ENCODE measurements at regions of chr2 and their contacts with region 1.

Region 1: DNA sequence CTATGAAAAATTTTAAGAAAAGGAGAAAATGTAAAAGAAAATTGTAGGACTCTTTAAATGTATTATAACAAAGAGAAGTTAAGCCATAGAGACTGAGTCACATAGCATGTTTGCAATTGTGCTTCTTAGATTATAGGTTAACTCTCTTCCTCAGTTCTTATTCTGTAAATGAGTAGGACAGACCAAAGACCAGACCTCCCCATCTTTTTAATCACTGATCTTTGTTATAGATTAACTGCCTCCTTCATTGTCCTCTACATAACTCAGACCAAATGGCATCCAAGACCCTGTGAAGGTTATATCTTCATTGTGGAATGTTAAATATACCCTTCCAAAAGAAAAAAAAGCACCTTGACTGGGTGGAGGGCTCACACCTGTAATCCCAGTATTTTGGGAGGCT is 316.9 kb upstream of the LRRTM4 start:
- DNase-seq: peak in 1 of 2 experiments; percentile 9
- H3K4me3 ChIP-seq: no peak overlapping the region
- H3K4me3 Mint-ChIP-seq: no peak overlapping the region
- H3K27ac Mint-ChIP-seq: no peak overlapping the region
- H3K4me1 ChIP-seq: peaks cover 24% of the 10 kb centered on the region
- H3K4me1 Mint-ChIP-seq: peaks cover 7% of the 10 kb centered on the region
- H3K27me3 ChIP-seq: no peaks in the 10 kb centered on the region
- H3K27me3 Mint-ChIP-seq: no peaks in the 10 kb centered on the region
- CTCF ChIP-seq: no peak

Region 2: DNA sequence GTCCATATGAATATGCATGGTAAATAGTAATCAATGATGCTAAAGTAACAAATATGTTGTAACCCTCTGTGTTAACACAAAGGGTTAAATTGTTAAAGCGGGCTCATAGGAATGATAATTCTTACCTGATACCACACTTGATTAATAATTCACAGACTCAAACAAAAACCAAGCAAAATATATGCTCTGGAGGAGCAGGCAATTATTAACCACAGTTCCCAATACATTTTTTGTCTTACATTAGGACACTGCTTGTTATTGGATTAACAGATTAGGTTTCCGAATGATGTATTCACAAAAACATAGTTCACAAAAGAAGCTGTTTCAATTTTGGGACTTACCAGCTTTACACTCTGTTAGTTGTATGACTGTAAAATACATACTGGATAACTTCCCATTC is 16.1 kb before region 1 on chr2:
- CTCF ChIA-PET with region 1: no interaction called
- POLR2A ChIA-PET with region 1: no interaction called
- intact Hi-C with region 1: loop called (anchors 1 kb)
- DNase-seq: peak in 1 of 2 experiments; percentile 52
- H3K4me3 ChIP-seq: no peak overlapping the region
- H3K4me3 Mint-ChIP-seq: no peak overlapping the region
- H3K27ac Mint-ChIP-seq: no peak overlapping the region
- H3K4me1 ChIP-seq: peaks cover 22% of the 10 kb centered on the region
- H3K4me1 Mint-ChIP-seq: no peaks in the 10 kb centered on the region
- H3K27me3 ChIP-seq: no peaks in the 10 kb centered on the region
- H3K27me3 Mint-ChIP-seq: no peaks in the 10 kb centered on the region
- CTCF ChIP-seq: no peak